Right ventricle myocardium inferior (tissue), 1 donor: ENCODE measurements at regions of chr18 and their contacts with region 1.

Region 1: GRCh38 chr18:35143622-35144596 is 96.9 kb upstream of the ZNF397 start:
- DNase-seq: no peak
- ATAC-seq: peak; percentile 95

Region 2: GRCh38 chr18:34122724-34123334 is 1021.1 kb before region 1 on chr18:
- intact Hi-C with region 1: no loop called
- DNase-seq: no peak
- ATAC-seq: no peak

Region 3: GRCh38 chr18:34880882-34881834 is 262.8 kb before region 1 on chr18:
- intact Hi-C with region 1: loop called (anchors 10 kb)
- DNase-seq: no peak
- ATAC-seq: peak; percentile 78

Region 4: GRCh38 chr18:35005963-35006577 is 137.8 kb before region 1 on chr18:
- intact Hi-C with region 1: loop called (anchors 1 kb)
- DNase-seq: no peak
- ATAC-seq: peak; percentile 87

Region 5: DNA sequence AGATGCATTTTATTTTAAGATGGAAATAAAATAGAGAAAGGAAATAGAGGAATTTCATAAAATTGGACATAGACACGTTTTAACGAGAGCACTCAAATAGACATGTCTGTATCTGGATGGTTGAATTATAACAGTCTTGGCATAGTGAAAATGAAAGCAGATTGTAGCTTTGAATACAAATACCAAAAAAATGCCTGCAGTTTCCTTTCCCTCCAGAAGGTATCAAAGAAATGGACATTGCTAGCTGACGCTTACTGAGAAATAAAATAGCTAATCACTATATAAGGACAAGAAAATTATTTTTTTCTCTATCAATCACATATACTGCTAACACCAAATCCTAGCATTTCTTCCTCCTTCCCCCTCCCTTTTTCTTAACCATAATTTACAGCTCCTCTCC is 114.1 kb before region 1 on chr18:
- intact Hi-C with region 1: loop called (anchors 5 kb)
- DNase-seq: no peak
- ATAC-seq: no peak

Region 6: DNA sequence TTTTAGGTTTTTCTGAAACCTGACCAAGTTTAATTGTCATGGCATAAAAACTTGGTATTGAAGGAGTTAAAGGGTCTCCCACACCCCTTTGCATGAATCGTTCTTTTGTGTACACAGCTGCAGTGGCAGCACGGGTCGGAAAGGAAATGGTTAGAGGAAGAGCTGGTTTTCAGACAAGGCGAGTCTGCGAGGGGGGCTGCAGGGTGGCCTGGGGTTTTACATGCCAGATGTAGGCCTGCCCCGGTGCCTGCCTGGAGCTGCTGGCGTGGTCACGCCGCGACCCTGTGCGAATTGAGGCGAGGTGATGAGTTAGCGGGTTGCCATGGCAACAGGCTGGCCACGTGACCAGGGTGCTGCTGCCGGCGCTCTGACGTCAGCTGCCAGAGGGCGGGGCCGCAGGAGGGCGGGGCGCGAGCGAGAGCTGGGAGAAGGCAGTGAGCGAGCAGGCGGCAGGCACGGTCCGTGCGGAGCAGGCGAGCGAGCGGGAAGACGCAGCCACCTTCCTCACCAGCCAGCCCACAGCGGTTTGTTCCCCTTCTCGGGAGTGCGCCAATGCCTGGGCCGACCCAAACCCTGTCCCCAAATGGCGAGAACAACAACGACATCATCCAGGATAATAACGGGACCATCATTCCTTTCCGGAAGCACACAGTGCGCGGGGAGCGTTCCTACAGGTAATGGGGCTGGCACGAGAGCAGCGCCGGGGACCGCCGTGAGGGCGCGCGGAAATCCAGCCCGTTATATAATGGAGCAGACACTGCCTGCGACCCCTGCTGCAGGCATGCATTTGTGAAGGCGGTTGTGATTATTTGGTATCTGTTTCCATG is 102.7 kb before region 1 on chr18 and contains the start of gene MAPRE2:
- intact Hi-C with region 1: loop called (anchors 2 kb)
- DNase-seq: peak; percentile 100
- ATAC-seq: peak; percentile 97
- total RNA-seq, gene MAPRE2: 112 TPM

Region 7: GRCh38 chr18:35215026-35215425 is 71.1 kb after region 1 on chr18:
- intact Hi-C with region 1: no loop called
- DNase-seq: no peak
- ATAC-seq: no peak